Lower leg skin (tissue), 4 donors: ENCODE measurements at regions of chr2 and their contacts with region 1.

Region 1: DNA sequence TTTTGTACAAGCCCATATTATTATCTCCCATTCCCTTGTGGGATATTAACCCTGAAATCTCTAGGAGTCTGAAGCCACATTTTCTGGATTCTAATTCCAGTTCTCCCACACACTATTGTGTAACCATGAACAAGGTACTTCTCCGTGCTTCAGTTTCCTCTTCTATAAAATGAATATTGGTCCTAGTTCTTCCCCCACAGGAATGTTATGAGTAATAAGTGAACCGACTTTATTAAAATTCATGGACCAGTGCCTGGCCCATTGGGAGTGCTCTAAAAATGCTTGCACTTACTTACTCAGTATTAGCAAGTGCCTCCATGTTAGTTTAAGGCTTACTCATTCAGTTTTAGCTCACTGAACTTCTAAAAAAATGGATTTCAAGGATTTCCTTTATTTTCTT is 1.4 kb upstream of the ACMSD start:
- DNase-seq: no peak
- H3K4me3 ChIP-seq: no peak overlapping the region
- CTCF ChIP-seq: no peak
- POLR2A ChIP-seq: no peak

Region 2: DNA sequence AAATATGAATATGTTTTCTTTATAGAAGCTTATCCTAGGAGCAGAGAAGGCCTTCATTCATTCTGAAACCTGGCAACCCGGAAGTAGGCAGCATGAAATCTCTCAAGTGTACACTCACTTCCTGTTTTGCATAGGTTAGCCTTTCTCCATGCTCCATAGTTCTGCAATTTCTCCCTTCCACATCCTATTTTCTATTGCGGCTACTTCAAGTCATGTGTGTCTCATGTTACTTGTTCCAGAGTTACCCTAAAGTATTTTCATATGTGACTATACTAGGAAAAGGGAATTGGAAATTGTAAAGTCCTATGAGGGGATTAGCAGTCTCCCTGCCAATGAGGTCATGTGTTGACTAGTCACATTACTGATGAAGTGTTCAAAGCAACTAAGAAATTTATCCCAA is 1589.4 kb before region 1 on chr2:
- intact Hi-C with region 1: loop called (anchors 10 kb)
- DNase-seq: peak in 1 of 2 donors; percentile 31
- H3K4me3 ChIP-seq: no peak overlapping the region
- CTCF ChIP-seq: no peak
- POLR2A ChIP-seq: no peak